ENCODE measurements at regions of chr7 and their contacts with region 1.

Region 1: GRCh38 chr7:104848138-104848990 is 165.6 kb upstream of the KMT2E start:
- DNase-seq: peak; percentile 58
- ATAC-seq: peak; percentile 28
- H3K4me3 ChIP-seq: no peak overlapping the region
- H3K4me3 Mint-ChIP-seq: no peak overlapping the region
- H3K27ac ChIP-seq: no peak overlapping the region
- H3K27ac Mint-ChIP-seq: no peak overlapping the region
- H3K4me1 ChIP-seq: no peaks in the 10 kb centered on the region
- H3K4me1 Mint-ChIP-seq: no peaks in the 10 kb centered on the region
- H3K27me3 ChIP-seq: peaks cover 0 to 13% (median 5%) of the 10 kb centered on the region in 4 experiments
- H3K27me3 Mint-ChIP-seq: peaks cover 40% of the 10 kb centered on the region
- CTCF ChIP-seq: peak; percentile 93

Region 2: DNA sequence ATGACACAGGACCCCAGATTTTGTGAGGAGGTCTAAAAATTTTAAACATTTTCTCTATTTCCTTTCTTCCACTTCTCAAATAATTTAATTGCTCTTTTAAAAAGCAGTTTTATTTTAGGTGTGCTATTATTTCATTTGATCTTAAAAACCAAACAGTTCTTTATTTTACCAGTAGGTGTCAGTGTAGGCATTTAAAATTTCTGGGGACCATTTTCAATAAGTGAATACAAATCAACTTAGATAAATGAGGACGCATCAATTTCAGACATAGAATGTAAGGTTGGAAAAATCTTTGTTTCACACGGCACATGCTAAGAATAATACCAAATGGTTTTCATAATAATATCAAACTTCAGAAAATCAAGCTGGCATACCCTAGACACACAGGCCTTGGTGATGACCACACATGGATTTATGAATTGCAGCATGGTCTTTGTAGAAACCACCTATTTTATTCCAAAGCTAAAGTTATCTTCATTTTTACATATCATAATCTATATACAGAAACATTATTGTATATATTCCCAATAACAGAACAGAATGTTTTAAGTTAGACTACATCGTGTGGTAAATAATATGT is 1274.8 kb before region 1 on chr7:
- CTCF ChIA-PET with region 1: interaction called, 4 read pairs
- POLR2A ChIA-PET with region 1: no interaction called
- intact Hi-C with region 1: loop called (anchors 10 kb)
- DNase-seq: peak; percentile 43
- ATAC-seq: no peak
- H3K4me3 ChIP-seq: no peak overlapping the region
- H3K4me3 Mint-ChIP-seq: no peak overlapping the region
- H3K27ac ChIP-seq: no peak overlapping the region
- H3K27ac Mint-ChIP-seq: no peak overlapping the region
- H3K4me1 ChIP-seq: no peaks in the 10 kb centered on the region
- H3K4me1 Mint-ChIP-seq: no peaks in the 10 kb centered on the region
- H3K27me3 ChIP-seq: no peaks in the 10 kb centered on the region
- H3K27me3 Mint-ChIP-seq: peaks cover 15% of the 10 kb centered on the region
- CTCF ChIP-seq: peak; percentile 84

Region 3: GRCh38 chr7:104231054-104232046 is 617.0 kb before region 1 on chr7:
- CTCF ChIA-PET with region 1: interaction called, 30 read pairs
- POLR2A ChIA-PET with region 1: no interaction called
- intact Hi-C with region 1: no loop called
- DNase-seq: peak; percentile 57
- ATAC-seq: peak; percentile 64
- H3K4me3 ChIP-seq: no peak overlapping the region
- H3K4me3 Mint-ChIP-seq: no peak overlapping the region
- H3K27ac ChIP-seq: no peak overlapping the region
- H3K27ac Mint-ChIP-seq: no peak overlapping the region
- H3K4me1 ChIP-seq: no peaks in the 10 kb centered on the region
- H3K4me1 Mint-ChIP-seq: peaks cover 1% of the 10 kb centered on the region
- H3K27me3 ChIP-seq: peaks cover 0 to 18% (median 5%) of the 10 kb centered on the region in 4 experiments
- H3K27me3 Mint-ChIP-seq: peaks cover 28% of the 10 kb centered on the region
- CTCF ChIP-seq: peak; percentile 85

Region 4: GRCh38 chr7:104836976-104837375 is 11.4 kb before region 1 on chr7:
- CTCF ChIA-PET with region 1: interaction called, 13 read pairs
- POLR2A ChIA-PET with region 1: no interaction called
- intact Hi-C with region 1: no loop called
- DNase-seq: no peak
- ATAC-seq: no peak
- H3K4me3 ChIP-seq: no peak overlapping the region
- H3K4me3 Mint-ChIP-seq: no peak overlapping the region
- H3K27ac ChIP-seq: no peak overlapping the region
- H3K27ac Mint-ChIP-seq: no peak overlapping the region
- H3K4me1 ChIP-seq: peaks cover 6 to 7% of the 10 kb centered on the region in 2 donors
- H3K4me1 Mint-ChIP-seq: peaks cover 4% of the 10 kb centered on the region
- H3K27me3 ChIP-seq: peaks cover 0 to 5% (median 0%) of the 10 kb centered on the region in 4 experiments
- H3K27me3 Mint-ChIP-seq: peaks cover 27% of the 10 kb centered on the region
- CTCF ChIP-seq: no peak

Region 5: DNA sequence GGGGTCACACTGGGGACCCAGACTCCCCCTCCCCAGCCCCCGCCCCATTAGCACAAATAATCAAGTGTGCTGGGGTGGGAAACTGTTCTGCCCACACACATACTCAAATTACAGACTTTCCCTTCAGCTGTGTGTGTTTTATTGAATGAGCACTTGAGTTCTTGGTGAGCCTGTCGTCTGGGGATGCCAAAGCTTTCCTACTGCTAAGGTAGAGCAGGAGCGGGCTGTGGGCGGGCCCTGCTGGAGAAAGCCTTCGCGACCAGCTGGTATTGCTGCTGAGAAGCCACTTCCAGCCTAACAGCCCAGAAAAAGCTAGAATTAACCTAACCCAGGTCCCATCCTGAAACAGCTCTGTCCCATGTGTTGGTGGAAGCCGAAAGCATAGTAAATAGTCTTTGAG is 78.7 kb after region 1 on chr7:
- CTCF ChIA-PET with region 1: no interaction called
- POLR2A ChIA-PET with region 1: no interaction called
- intact Hi-C with region 1: no loop called
- DNase-seq: no peak
- ATAC-seq: no peak
- H3K4me3 ChIP-seq: no peak overlapping the region
- H3K4me3 Mint-ChIP-seq: no peak overlapping the region
- H3K27ac ChIP-seq: no peak overlapping the region
- H3K27ac Mint-ChIP-seq: no peak overlapping the region
- H3K4me1 ChIP-seq: peaks cover 18 to 25% of the 10 kb centered on the region in 2 donors
- H3K4me1 Mint-ChIP-seq: peaks cover 24% of the 10 kb centered on the region
- H3K27me3 ChIP-seq: no peaks in the 10 kb centered on the region
- H3K27me3 Mint-ChIP-seq: no peaks in the 10 kb centered on the region
- CTCF ChIP-seq: no peak